Posterior cingulate gyrus (tissue), 11 donors: ENCODE measurements at regions of chr14 and their contacts with region 1.

Region 1: GRCh38 chr14:100547633-100548294 is 39.5 kb downstream of the BEGAIN start:
- DNase-seq: peak in 1 of 10 donors; percentile 32

Region 2: DNA sequence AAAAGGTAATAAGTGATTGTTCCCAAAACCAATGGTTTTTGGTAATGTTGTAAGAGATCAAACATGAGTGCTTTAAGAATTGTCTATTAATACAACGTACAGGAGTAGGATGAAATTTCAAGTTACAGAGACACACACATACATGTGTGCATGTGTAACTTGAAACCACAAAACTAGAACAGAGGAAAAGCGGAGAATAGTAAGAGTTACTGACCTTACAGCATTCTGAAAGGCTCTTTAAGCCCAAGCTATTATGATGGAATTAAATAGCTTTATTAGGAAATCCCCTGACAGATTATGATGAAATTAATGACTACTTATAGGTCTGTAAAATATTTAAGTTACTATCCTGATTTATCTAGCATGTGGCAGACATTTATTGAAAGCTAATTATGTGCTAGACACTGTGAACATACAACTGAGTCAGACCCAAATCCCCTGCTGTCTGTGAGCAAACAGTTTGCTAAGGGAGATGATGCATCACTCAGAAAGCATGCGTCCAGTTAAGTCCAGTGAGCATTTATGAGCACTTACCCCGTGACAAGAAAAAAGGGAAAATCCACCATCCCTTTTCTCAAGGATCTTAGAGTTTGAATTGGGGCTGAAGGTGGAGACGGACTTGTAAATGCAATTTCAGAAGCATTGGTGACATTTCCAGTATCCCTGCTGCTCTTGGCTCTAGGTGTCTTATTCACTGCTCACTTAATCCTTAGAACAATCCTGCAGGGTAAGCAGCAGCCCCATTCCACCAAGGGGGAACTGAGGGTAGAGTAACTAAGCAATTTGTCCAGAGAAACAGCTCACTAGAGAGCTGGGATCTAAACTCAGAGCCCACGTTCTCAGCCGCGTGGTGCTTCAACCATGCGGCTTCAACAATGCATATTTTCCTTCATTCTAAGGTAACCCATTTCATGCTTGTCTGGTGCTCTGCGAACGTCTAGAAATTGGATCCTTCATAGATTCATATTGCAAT is 637.1 kb before region 1 on chr14:
- intact Hi-C with region 1: no loop called
- DNase-seq: no peak

Region 3: GRCh38 chr14:100621806-100622205 is 74.0 kb after region 1 on chr14:
- intact Hi-C with region 1: loop called (anchors 10 kb)
- DNase-seq: peak in 2 of 10 donors; percentile 12 to 65

Region 4: DNA sequence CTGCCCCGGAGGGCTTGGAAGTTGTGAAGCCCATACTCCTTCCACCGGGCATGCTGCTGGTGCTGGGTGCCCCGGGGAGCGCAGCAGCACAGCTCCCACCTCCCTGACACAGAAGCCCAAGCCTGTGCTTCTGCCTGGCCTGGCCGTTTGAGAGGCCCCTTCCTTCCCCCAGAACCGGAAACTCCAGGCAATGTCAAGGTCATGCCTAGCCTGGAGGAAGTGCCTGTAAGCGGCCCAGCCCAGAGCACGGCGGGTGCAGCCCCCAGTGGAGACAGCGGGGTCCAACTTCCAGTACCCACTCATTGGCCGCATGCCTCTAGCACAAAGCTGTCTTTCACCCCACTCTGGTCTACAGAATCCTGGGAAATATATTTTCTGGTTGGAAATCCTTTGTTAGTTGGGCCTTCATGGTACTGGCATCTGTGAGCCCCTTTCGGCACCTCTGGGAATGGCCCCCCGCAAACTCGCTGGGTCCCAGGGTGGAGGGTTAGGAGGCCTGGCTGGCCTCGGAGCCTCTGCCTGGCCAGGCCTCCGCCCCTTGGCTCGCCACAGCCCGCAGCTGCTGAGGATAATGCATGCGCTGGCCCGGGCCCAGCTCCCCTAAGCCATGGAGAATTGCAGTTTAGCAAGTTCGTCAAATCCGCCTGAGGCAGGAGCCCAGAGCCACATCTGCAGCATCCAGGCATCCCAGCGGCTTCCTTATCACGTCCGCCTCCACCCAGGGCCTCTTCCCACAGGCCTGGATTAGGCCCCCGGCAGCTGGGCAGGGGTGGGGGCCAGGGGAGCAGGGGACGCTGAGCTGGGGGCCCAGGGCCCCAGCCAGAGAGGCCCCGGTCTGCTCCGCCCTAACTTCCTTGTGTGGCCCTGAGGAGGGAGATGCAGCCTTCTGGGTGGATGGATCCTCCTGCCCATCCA is 130.0 kb after region 1 on chr14:
- intact Hi-C with region 1: no loop called
- DNase-seq: peak in 8 of 10 donors; percentile 29 to 94 (median 58)